ENCODE measurements at regions of chr13 and their contacts with region 1.

Region 1: GRCh38 chr13:107867701-107868661 is 347.4 kb downstream of the LIG4 start:
- DNase-seq: peak; percentile 61
- ATAC-seq: peak; percentile 52
- H3K4me3 ChIP-seq: peak overlapping the region; percentile 97
- H3K27ac ChIP-seq: no peak overlapping the region
- H3K4me1 ChIP-seq: peaks cover 17% of the 10 kb centered on the region; the same call in 1 of the 2 replicates
- H3K27me3 ChIP-seq: no peaks in the 10 kb centered on the region
- CTCF ChIP-seq: peak; percentile 84

Region 2: GRCh38 chr13:107211073-107211472 is 656.9 kb before region 1 on chr13:
- CTCF ChIA-PET with region 1: no interaction called
- POLR2A ChIA-PET with region 1: no interaction called
- intact Hi-C with region 1: loop called (anchors 2 kb)
- DNase-seq: peak; percentile 88
- ATAC-seq: peak; percentile 93
- H3K4me3 ChIP-seq: peak overlapping the region; percentile 46; the same call in 1 of the 2 replicates
- H3K27ac ChIP-seq: no peak overlapping the region
- H3K4me1 ChIP-seq: peaks cover 13% of the 10 kb centered on the region; the same call in 1 of the 2 replicates
- H3K27me3 ChIP-seq: no peaks in the 10 kb centered on the region
- CTCF ChIP-seq: peak; percentile 89

Region 3: DNA sequence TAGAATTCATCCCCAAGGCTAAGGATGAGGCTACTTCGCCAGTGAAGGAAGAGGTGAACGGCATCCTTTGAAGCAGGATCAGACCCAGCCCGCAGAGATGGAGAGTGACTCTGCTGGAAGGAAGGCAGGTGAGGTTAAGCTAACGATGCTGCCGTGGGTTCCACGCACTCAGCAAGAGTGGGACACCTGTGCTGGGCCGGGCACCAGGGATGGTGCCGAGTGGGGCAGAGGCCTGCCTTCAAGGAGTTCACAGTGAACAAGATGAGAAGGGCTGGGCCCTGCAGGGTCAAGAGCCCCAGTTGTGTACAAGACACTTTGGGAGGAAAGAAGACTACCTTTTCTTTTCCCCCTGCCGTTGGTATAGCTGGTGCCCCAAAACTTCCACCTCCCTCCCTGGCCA is 259.2 kb before region 1 on chr13:
- CTCF ChIA-PET with region 1: no interaction called
- POLR2A ChIA-PET with region 1: no interaction called
- intact Hi-C with region 1: no loop called
- DNase-seq: no peak
- ATAC-seq: no peak
- H3K4me3 ChIP-seq: no peak overlapping the region
- H3K27ac ChIP-seq: no peak overlapping the region
- H3K4me1 ChIP-seq: no peaks in the 10 kb centered on the region
- H3K27me3 ChIP-seq: no peaks in the 10 kb centered on the region
- CTCF ChIP-seq: no peak

Region 4: GRCh38 chr13:107678075-107678689 is 189.8 kb before region 1 on chr13:
- CTCF ChIA-PET with region 1: no interaction called
- POLR2A ChIA-PET with region 1: no interaction called
- intact Hi-C with region 1: loop called (anchors 5 kb)
- DNase-seq: peak; percentile 43
- ATAC-seq: peak; percentile 40
- H3K4me3 ChIP-seq: no peak overlapping the region
- H3K27ac ChIP-seq: no peak overlapping the region
- H3K4me1 ChIP-seq: no peaks in the 10 kb centered on the region
- H3K27me3 ChIP-seq: no peaks in the 10 kb centered on the region
- CTCF ChIP-seq: peak; percentile 43; the same call in 1 of the 2 replicates

Region 5: DNA sequence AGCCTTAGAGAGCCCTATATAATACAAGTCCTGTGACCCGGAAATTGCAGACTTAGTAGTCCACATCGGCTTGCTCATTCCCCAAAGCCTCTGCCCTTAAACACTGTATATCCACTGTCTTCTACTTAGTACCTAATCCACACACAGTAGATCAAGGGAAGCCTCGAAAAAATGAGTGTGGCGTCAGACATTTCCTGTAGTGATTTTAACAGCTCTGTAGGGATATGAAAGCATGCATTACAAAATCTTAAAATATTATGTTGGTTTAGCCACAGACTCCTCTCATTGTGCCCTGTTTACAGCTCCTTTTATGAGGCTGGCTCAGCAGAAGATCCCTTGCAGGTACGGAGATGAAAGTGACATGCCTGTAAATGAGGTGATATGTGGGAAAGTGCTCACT is 69.0 kb before region 1 on chr13:
- CTCF ChIA-PET with region 1: no interaction called
- POLR2A ChIA-PET with region 1: no interaction called
- intact Hi-C with region 1: loop called (anchors 2 kb)
- DNase-seq: peak; percentile 69
- ATAC-seq: peak; percentile 92
- H3K4me3 ChIP-seq: peak overlapping the region; percentile 45
- H3K27ac ChIP-seq: peak overlapping the region; percentile 49
- H3K4me1 ChIP-seq: peaks cover 23% of the 10 kb centered on the region
- H3K27me3 ChIP-seq: no peaks in the 10 kb centered on the region
- CTCF ChIP-seq: no peak

Region 6: DNA sequence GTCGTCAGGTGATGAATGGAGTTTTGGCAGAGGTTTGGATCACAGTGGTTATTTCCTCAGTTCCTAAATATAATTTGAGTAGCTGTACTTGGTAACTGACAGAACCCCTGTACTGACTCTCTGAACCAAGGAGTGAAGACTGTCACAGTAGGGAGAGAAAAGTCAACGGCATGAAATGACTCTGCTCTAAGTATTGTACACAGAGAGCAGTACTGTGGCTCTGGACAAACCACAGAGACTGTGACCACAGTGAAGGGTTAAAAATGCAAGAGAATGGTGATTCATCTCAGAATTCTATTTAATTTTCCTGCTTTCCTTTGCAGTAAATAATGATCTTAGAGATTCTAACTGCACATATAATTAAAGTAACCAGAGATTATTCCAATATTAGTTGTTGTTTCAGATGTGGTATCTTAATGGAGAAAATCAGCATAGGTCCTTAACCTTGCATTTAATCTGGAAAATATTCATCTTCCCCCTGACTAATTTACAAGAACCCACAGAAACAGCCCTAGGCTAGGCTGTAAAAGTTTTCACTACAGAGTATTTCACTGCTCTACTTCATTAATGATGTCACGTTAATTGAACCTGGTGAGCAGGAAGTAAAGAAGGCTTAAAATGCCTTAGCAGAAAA is 125.4 kb after region 1 on chr13:
- CTCF ChIA-PET with region 1: no interaction called
- POLR2A ChIA-PET with region 1: no interaction called
- intact Hi-C with region 1: no loop called
- DNase-seq: peak; percentile 55
- ATAC-seq: peak; percentile 90
- H3K4me3 ChIP-seq: no peak overlapping the region
- H3K27ac ChIP-seq: peak overlapping the region; percentile 42
- H3K4me1 ChIP-seq: peaks cover 21% of the 10 kb centered on the region
- H3K27me3 ChIP-seq: no peaks in the 10 kb centered on the region
- CTCF ChIP-seq: no peak

Region 7: DNA sequence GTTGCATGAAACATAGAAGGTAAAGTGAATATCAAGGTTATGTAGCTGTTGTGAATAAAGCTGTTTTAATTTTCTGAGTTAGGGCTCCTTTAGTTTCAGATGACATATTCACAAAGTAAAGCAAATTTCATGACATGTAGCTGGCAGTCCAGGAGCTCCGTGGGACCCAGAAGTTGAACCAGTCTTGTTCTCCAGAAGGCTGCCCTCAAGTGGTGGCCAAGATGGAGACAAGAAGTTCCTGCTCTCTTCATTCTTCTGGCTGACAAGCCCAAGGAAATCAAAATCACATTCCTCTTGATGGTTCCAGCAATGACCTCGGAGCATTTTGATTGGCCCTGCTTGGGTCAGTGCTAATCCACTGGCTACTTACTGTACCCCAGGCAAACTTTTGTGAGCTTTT is 218.7 kb after region 1 on chr13:
- CTCF ChIA-PET with region 1: no interaction called
- POLR2A ChIA-PET with region 1: no interaction called
- intact Hi-C with region 1: loop called (anchors 5 kb)
- DNase-seq: peak; percentile 51
- ATAC-seq: peak; percentile 35; the same call in 1 of the 2 replicates
- H3K4me3 ChIP-seq: no peak overlapping the region
- H3K27ac ChIP-seq: no peak overlapping the region
- H3K4me1 ChIP-seq: 0 out of 2 replicates have a peak, but pooled peaks cover 9% of the 10 kb centered on the region
- H3K27me3 ChIP-seq: no peaks in the 10 kb centered on the region
- CTCF ChIP-seq: peak; percentile 59

Region 8: DNA sequence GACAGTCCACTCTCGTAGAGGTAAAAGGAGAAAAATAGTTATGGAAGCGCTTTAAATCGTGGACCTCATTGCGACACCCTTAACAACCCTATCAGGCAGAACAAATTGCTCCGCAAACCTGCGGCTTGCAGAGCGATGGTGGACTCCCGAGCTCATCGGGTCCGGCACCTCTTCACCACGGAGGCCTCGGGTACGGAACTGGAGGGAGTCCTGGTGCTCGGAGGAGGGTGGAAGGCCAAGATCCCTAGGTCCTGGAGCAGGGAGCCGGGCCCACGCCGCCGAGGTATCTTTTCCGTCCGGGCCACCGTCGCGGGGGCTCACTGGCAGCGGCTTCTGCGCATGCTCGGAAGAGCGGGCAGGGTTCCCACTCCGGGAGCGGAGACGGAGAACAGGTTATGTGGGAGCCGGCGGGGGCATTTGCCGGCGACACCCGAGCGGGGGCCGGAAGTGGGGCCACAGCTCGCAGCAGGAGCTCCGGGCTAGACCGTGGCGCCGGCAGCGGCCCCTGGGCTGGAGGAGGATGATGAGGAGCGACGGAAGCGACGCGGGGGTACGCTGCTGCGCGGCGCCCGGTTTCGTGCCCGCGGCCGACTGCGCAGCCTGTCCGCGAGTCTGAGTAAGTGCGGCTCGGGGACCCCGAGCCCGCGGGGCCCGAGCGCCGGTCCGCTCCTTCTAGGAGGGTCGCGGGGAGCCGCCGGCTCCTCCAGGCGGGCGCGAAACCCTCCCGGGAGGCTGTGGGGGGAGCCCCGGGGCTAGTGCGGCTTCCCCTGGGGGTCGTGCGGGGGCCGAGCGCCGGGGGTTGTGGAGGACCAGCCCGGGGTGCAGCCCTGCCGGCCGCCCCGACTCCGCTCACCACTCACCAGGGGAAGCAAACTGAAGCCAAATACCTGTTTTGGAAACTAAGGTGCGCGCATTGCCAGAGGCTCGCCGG is 350.3 kb after region 1 on chr13 and contains the start of gene ABHD13:
- CTCF ChIA-PET with region 1: no interaction called
- POLR2A ChIA-PET with region 1: no interaction called
- intact Hi-C with region 1: loop called (anchors 10 kb)
- DNase-seq: peak; percentile 95
- ATAC-seq: peak; percentile 71
- H3K4me3 ChIP-seq: peak within 1 kb of the TSS; percentile 83
- H3K27ac ChIP-seq: peak within 1 kb of the TSS; percentile 45
- H3K4me1 ChIP-seq: peaks cover 27% of the 10 kb centered on the region; the same call in 1 of the 2 replicates
- H3K27me3 ChIP-seq: no peaks in the 10 kb centered on the region
- CTCF ChIP-seq: no peak
- total RNA-seq, gene ABHD13: 2.9 and 3.9 TPM in 2 replicates